SK-N-SH (cell line): ENCODE measurements at regions of chr11 and their contacts with region 1.

Region 1: DNA sequence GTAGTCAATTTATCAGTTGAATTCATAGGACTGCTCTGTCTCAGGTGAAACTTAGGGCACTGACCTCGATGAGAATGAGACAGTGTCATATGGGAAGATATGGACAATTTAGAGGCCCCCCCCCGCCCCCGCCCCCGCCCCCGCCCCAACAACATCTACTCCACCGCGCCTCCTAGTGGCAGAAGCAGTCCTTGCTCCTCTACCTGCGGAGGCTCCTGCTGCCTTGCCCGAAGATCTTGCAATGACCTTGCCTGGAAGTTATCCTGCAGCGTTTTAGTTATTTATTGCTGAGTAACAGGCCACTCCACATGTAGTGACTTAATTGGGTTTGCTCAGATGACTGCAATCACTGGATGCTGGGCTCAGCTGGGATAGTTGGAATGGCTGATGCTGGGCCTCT is 15.2 kb downstream of the SERPINH1 start:
- DNase-seq: peak; percentile 84
- H3K4me3 ChIP-seq: no peak overlapping the region
- H3K27ac ChIP-seq: peak overlapping the region in 1 of 2 experiments; percentile 23; a peak in 1 of 4 replicates
- H3K4me1 ChIP-seq: peaks cover 1 to 7% of the 10 kb centered on the region in 2 experiments; a peak in 2 of 4 replicates
- H3K27me3 ChIP-seq: no peaks in the 10 kb centered on the region
- CTCF ChIP-seq: peak; percentile 59
- EP300 ChIP-seq: no peak
- RAD21 ChIP-seq: peak; percentile 34

Region 2: DNA sequence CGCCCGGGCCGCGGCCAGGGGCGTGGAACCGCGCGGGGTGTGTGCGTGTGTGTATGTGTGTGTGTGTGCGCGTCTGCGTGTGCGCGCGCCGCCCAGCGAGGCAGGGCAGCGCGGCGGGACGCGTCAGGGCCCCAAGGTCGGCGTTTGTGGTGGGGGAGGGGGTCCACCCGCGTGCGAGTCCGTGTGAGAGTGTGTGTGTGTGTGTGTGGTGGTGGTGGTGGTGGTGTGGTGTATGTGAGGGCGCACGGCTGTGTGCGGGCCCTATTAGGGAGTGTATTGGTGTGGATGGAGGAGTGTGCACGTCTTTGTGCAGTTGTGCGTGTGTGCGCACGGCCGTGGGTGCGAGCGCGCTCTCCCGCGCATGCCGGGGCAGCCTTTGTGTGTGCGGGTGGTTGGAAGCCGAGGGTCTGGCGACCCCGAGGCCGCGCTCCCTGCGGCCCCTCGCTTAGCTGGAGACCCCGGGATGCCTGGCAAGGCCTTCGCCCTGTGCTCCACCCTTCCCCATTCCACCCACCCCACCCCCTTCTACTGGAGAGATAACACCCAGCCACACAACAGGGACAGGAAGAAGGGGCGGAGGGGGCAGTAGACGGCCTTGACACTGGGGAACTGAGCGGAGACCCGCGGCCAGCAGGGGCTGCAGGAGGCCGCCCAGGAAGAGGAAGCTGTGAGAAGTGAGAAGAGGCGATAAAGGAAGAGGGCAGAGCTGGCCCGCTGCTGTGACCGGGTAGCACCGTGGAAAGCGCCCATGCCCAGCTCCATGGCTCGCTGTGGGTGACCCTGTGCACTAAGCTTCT is 225.2 kb before region 1 on chr11:
- CTCF ChIA-PET with region 1: no interaction called
- POLR2A ChIA-PET with region 1: no interaction called
- DNase-seq: peak; percentile 92
- H3K4me3 ChIP-seq: peak overlapping the region; percentile 64 to 73
- H3K27ac ChIP-seq: peak overlapping the region in 1 of 2 experiments; percentile 96; a peak in 2 of 4 replicates
- H3K4me1 ChIP-seq: peaks cover 23 to 48% of the 10 kb centered on the region in 2 experiments; a peak in 3 of 4 replicates
- H3K27me3 ChIP-seq: no peaks in the 10 kb centered on the region
- CTCF ChIP-seq: no peak
- EP300 ChIP-seq: no peak
- RAD21 ChIP-seq: peak; percentile 35

Region 3: GRCh38 chr11:75499449-75500190 is 77.6 kb before region 1 on chr11:
- CTCF ChIA-PET with region 1: no interaction called
- POLR2A ChIA-PET with region 1: no interaction called
- DNase-seq: no peak
- H3K4me3 ChIP-seq: no peak overlapping the region
- H3K27ac ChIP-seq: peak overlapping the region in 1 of 2 experiments; percentile 39; a peak in 2 of 4 replicates
- H3K4me1 ChIP-seq: peaks cover 0 to 12% of the 10 kb centered on the region in 2 experiments; a peak in 2 of 4 replicates
- H3K27me3 ChIP-seq: no peaks in the 10 kb centered on the region
- CTCF ChIP-seq: no peak
- EP300 ChIP-seq: no peak
- RAD21 ChIP-seq: no peak

Region 4: DNA sequence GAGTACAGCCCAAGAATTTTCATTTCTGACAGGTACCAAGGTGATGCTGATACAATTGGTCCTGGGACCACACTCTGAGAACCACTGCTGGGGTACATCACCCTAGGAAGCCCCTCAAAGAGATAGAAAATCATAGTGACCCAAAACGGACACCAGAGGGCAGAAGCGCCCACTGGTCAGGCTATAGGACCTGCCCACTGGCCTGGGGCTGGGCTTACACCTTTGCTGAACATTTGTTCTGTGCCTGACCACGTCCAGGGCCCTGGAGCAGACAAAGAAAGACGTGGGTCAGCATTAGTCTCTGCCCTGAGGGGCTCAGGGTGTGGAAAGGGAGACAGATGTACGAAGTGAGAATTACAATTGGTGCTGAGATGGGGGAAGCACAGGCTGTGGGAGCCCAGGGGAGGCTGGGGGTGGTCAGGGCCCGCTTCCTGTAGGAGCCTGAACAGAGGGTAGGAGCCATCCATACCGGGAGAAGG is 29.6 kb before region 1 on chr11:
- CTCF ChIA-PET with region 1: interaction called, 15 read pairs
- POLR2A ChIA-PET with region 1: no interaction called
- DNase-seq: peak; percentile 88
- H3K4me3 ChIP-seq: peak overlapping the region in 1 of 2 experiments; percentile 35; a peak in 1 of 4 replicates
- H3K27ac ChIP-seq: peak overlapping the region in 1 of 2 experiments; percentile 36; a peak in 1 of 4 replicates
- H3K4me1 ChIP-seq: peaks cover 0 to 11% of the 10 kb centered on the region in 2 experiments; a peak in 1 of 4 replicates
- H3K27me3 ChIP-seq: no peaks in the 10 kb centered on the region
- CTCF ChIP-seq: peak; percentile 90
- EP300 ChIP-seq: no peak
- RAD21 ChIP-seq: peak; percentile 96

Region 5: GRCh38 chr11:75554258-75555022 is 22.8 kb before region 1 on chr11:
- CTCF ChIA-PET with region 1: interaction called, 41 read pairs
- POLR2A ChIA-PET with region 1: interaction called, 39 read pairs
- DNase-seq: peak; percentile 96
- H3K4me3 ChIP-seq: peak overlapping the region in 1 of 2 experiments; percentile 14; a peak in 1 of 4 replicates
- H3K27ac ChIP-seq: peak overlapping the region; percentile 58 to 98; a peak in 3 of 4 replicates
- H3K4me1 ChIP-seq: peaks cover 38 to 58% of the 10 kb centered on the region in 2 experiments
- H3K27me3 ChIP-seq: no peaks in the 10 kb centered on the region
- CTCF ChIP-seq: no peak
- EP300 ChIP-seq: peak; percentile 20 to 89; a peak in 3 of 4 replicates
- RAD21 ChIP-seq: no peak; the same call in 1 of the 2 replicates

Region 6: DNA sequence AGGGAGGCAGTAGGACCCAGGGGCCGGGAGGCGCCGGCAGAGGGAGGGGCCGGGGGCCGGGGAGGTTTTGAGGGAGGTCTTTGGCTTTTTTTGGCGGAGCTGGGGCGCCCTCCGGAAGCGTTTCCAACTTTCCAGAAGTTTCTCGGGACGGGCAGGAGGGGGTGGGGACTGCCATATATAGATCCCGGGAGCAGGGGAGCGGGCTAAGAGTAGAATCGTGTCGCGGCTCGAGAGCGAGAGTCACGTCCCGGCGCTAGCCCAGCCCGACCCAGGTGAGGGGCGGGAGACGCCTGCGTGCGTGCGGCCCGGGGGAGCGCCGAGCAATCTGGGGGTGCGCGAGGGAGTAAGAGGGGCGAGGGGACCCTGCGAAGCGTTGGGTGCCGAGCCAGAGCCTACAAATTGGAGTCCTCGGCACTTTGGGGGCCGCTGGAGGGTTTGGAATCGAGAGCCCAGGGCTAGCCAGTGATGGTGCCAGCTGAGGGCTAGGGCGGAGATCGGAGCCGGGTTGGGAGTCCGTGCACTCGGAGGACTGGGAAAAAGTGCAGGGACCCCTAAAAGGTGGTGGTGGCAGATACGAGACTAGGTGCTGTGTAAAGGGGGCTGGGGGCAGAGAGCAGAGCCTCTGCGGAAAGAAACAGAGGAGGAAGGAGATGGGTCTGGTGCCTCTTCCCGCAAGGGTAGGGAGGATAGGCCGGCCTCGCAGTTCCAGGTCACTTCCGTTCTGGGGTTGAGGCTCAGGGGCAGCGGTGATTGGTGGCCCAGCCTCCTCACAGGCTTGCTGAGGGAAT is 15.0 kb before region 1 on chr11 and contains the start of gene SERPINH1:
- CTCF ChIA-PET with region 1: interaction called, 45 read pairs
- POLR2A ChIA-PET with region 1: interaction called, 21 read pairs
- DNase-seq: peak; percentile 95
- H3K4me3 ChIP-seq: peak within 1 kb of the TSS; percentile 77 to 89
- H3K27ac ChIP-seq: peak within 1 kb of the TSS; percentile 92 to 98
- H3K4me1 ChIP-seq: peaks cover 46 to 60% of the 10 kb centered on the region in 2 experiments
- H3K27me3 ChIP-seq: no peaks in the 10 kb centered on the region
- CTCF ChIP-seq: no peak
- EP300 ChIP-seq: peak; percentile 43 to 87; a peak in 3 of 4 replicates
- RAD21 ChIP-seq: no peak
- polyA plus RNA-seq, gene SERPINH1: 221 and 293 TPM in 2 replicates